Gastrocnemius medialis (tissue), 4 donors: ENCODE measurements at regions of chr22 and their contacts with region 1.

Region 1: DNA sequence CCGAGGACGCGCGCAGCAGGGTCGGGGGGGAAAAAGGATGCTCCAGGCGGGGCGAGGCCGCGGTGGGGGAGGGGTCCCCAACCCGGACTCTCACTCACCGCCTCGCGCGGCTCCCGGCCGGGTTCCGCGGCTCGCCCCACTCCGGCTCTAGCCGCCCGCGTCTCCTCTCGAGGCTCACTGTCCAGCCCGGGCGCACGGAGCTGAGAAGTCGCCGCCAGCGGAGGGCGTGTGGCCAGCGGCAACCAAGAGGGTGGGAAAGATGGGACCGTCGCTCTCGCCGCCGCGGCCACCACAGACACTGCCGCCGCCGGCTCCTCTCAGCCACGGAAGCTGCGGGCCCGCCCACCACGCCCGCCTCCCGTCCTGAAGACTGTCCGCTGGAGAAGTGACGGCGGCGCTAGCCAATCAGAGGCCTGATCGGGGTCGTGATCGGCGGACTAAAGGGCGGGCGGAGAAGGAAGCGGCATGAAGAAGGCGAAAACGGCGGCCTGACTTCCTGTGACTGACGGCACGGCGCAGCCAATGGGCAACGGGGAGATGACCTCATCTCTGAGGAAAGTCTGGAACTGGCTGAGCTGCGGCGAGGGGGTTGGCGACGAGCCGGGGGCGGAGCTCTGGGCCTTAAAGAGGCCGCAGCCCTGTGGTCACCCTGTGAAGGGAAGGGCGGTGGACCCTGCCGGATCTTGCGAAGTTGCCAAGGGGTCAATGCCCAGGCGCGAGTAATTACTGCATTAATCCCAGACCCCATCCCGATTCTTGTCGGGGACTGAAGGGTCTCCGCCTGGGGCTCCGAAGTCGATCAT is at the start of gene MRTFA:
- DNase-seq: peak; percentile 100
- ATAC-seq: peak; percentile 96
- H3K4me3 ChIP-seq: peak within 1 kb of the TSS; percentile 72 to 96 (median 75)
- H3K27ac ChIP-seq: peak within 1 kb of the TSS; percentile 90 to 96 (median 92)
- H3K4me1 ChIP-seq: peaks cover 29 to 31% of the 10 kb centered on the region in 2 donors
- H3K27me3 ChIP-seq: no peaks in the 10 kb centered on the region
- CTCF ChIP-seq: no peak
- POLR2A ChIP-seq: peak; percentile 98 to 99
- total RNA-seq, gene MRTFA: 13.7 to 31.3 (median 22.2) TPM

Region 2: GRCh38 chr22:40116496-40117200 is 519.9 kb before region 1 on chr22:
- in situ Hi-C with region 1: no loop called
- intact Hi-C with region 1: no loop called
- DNase-seq: no peak
- ATAC-seq: no peak
- H3K4me3 ChIP-seq: no peak overlapping the region
- H3K27ac ChIP-seq: no peak overlapping the region
- H3K4me1 ChIP-seq: peaks cover 49 to 55% of the 10 kb centered on the region in 2 donors
- H3K27me3 ChIP-seq: no peaks in the 10 kb centered on the region
- CTCF ChIP-seq: no peak
- POLR2A ChIP-seq: no peak

Region 3: DNA sequence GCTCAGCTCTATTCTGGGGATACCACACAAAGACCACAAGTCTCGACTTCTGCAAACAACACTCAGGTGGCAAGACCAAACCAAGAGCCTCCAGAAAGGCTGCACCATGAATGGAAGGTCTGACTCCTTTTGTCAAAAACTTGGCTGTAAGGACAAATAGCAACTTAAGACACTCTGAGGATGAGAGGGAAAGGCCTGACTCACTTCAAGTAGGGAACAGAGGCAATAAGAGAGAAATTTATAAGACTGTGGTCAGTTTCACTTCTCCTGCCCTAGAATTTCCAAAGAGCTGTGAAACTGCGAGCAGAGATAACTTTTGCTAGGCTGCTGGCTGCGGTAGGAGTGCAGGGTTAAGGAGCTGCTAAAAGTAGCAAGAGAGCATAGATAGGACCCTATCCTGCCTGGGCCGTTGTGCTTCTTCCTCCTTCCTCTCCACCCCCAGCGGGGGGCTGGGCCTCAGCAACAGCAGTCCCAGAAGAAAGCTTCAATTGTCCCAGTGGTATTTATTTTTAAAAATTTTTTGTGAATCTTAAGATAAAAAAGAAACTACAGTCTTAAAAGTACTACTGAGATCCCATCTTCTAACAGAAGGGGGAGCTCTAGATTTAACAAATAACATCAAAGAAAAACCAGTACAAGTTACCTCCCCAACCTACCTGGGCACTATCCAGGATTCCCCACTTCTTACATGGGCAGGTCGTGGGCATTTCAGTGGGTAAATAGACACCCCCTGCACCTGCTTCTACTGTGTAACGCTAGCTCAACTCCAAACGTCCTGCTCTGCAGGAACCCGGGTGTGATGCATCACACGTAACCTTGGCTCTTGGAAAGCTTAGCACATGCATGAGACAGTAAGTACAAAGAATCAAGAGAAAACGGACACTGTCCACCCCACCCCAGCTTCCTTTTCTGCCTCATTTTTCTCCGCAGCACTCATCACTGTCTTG is 199.8 kb before region 1 on chr22:
- in situ Hi-C with region 1: loop called in 2 of 4 experiments (anchors 5 kb)
- intact Hi-C with region 1: no loop called
- DNase-seq: peak in 1 of 2 donors; percentile 40
- ATAC-seq: peak; percentile 59 to 79
- H3K4me3 ChIP-seq: peak overlapping the region; percentile 19 to 38 (median 32)
- H3K27ac ChIP-seq: peak overlapping the region; percentile 78 to 91 (median 86)
- H3K4me1 ChIP-seq: peaks cover 34 to 40% of the 10 kb centered on the region in 2 donors
- H3K27me3 ChIP-seq: no peaks in the 10 kb centered on the region
- CTCF ChIP-seq: peak; percentile 73 to 83 (median 77)
- POLR2A ChIP-seq: no peak

Region 4: DNA sequence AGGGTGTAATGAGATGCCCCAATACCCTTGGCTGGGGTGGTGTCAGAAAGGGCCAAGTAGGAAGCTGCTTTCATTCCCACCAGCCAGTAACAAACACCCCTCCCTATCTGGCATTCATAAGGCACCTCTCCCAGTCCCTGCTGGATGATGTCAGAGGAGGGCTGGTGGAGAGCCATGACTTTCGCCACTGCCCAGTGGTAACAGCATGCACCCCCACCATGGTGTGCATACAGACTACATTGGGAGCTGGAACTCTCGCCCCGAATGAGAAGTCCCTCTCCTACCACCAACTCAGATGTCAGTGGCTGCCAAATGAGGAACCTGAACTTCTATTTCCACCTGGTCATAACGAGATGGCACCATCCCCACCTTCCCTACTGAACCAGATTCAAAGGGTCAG is 192.8 kb before region 1 on chr22:
- in situ Hi-C with region 1: loop called in 1 of 4 experiments (anchors 5 kb)
- intact Hi-C with region 1: no loop called
- DNase-seq: peak in 1 of 2 donors; percentile 67
- ATAC-seq: peak; percentile 58 to 83
- H3K4me3 ChIP-seq: no peak overlapping the region
- H3K27ac ChIP-seq: peak overlapping the region; percentile 3 to 70 (median 56)
- H3K4me1 ChIP-seq: peaks cover 20 to 26% of the 10 kb centered on the region in 2 donors
- H3K27me3 ChIP-seq: no peaks in the 10 kb centered on the region
- CTCF ChIP-seq: no peak
- POLR2A ChIP-seq: no peak

Region 5: DNA sequence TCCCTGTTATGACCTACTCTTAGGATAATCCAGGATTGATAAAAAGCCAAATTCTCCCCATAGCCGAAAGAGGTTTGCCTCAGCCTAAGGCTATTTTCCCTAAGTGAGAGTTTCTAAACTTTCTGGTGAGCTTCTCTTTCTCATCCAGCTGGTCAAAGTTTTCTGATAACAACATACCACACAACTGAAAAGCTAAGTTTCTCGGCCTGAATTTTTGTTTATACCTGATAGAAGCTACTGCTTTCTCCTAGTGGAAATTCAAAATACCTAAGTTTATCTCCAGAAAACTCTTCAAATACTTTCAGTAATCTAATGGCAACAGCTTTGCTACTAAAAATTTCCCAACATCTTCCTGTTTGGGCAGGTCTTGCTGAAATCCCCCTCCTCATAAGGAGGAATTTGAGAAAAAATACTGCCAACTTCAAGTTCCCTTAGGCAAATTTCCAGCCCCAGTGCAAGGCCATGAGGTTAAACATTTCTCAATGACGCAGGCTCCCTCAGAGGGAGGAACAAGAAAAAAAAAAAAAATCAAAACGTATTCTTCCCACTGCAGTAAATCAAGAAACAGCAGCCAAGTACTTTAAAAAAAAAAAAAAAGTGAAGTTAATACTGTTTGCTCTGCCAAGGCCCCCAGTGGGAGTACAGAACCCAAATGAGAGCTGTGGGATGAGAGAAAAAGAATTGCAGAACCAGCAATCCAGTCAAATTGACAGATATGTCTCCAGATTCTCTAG is 127.0 kb before region 1 on chr22:
- in situ Hi-C with region 1: no loop called
- intact Hi-C with region 1: loop called (anchors 5 kb)
- DNase-seq: peak; percentile 29
- ATAC-seq: peak; percentile 32 to 45
- H3K4me3 ChIP-seq: no peak overlapping the region
- H3K27ac ChIP-seq: peak overlapping the region; percentile 68 to 78 (median 73)
- H3K4me1 ChIP-seq: peaks cover 56 to 59% of the 10 kb centered on the region in 2 donors
- H3K27me3 ChIP-seq: no peaks in the 10 kb centered on the region
- CTCF ChIP-seq: no peak
- POLR2A ChIP-seq: no peak

Region 6: GRCh38 chr22:40525249-40525884 is 111.2 kb before region 1 on chr22:
- in situ Hi-C with region 1: loop called in 3 of 4 experiments (anchors 5 to 10 kb)
- intact Hi-C with region 1: no loop called
- DNase-seq: peak in 1 of 2 donors; percentile 26
- ATAC-seq: no peak
- H3K4me3 ChIP-seq: no peak overlapping the region
- H3K27ac ChIP-seq: no peak overlapping the region
- H3K4me1 ChIP-seq: peaks cover 0 to 8% of the 10 kb centered on the region in 2 donors
- H3K27me3 ChIP-seq: no peaks in the 10 kb centered on the region
- CTCF ChIP-seq: peak; percentile 52 to 75 (median 55)
- POLR2A ChIP-seq: no peak

Region 7: GRCh38 chr22:40818747-40819598 is 182.4 kb after region 1 on chr22 and contains the start of gene SLC25A17:
- in situ Hi-C with region 1: no loop called
- intact Hi-C with region 1: loop called (anchors 5 kb)
- DNase-seq: peak; percentile 82 to 87
- ATAC-seq: peak; percentile 85 to 87
- H3K4me3 ChIP-seq: peak within 1 kb of the TSS; percentile 82 to 100 (median 96)
- H3K27ac ChIP-seq: peak within 1 kb of the TSS; percentile 83 to 97 (median 90)
- H3K4me1 ChIP-seq: peaks cover 26 to 31% of the 10 kb centered on the region in 2 donors
- H3K27me3 ChIP-seq: no peaks in the 10 kb centered on the region
- CTCF ChIP-seq: peak; percentile 39 to 57 (median 44)
- POLR2A ChIP-seq: peak; percentile 63
- total RNA-seq, gene SLC25A17: 2.6 to 12.2 (median 3.8) TPM